Endothelial cell of umbilical vein (primary cell): ENCODE measurements at regions of chr10 and their contacts with region 1.

Region 1: GRCh38 chr10:99845837-99846382 is 63.5 kb downstream of the ABCC2 start:
- DNase-seq: peak; percentile 94
- H3K4me3 ChIP-seq: peak overlapping the region in 1 of 3 experiments; percentile 41
- H3K27ac ChIP-seq: peak overlapping the region; percentile 10
- H3K4me1 ChIP-seq: peaks cover 18% of the 10 kb centered on the region
- H3K27me3 ChIP-seq: no peaks in the 10 kb centered on the region
- CTCF ChIP-seq: peak; percentile 72 to 94
- POLR2A ChIP-seq: no peak

Region 2: DNA sequence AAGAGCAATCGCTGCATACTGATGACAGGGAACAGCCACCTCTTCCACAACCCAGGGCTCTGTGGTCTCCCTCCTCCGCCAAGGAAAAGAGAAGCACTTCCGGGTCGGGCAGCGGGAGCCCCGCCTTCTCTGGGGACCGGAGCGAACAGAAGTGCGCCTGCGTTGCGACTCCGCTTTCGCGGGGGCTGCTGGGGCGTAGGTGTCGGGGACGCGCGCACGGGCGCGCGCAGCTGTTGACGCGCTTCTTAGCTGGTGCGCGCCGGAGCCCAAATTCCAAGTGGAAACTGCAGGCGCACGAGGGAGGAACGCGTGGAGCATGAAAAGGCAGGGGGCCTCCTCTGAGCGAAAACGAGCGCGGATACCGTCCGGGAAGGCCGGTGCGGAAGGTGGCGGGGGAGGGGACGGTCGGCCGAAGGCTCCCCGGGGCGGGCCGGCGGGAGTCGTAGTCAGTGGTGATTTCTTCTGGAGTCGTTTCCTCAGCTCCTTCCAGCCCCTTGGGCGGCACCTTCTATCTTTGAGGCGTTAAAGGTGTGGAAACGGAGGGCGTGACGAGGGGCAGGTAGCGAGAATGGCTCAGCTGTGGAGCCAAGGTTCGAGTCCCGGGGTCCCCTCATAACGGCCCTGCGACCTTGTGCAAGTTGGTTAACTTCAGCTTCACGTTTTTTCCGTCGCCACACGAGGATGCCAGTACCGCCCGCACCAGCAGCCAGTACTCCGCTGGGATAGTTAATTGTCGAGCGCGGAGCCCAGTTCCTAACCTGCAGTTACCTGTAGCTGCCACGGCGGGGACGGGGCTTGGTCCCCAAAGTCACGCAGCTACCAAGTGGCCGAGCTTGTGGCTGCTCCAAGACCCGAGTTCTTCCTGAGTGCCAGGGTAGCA is 113.6 kb before region 1 on chr10 and contains the starts of genes COX15 and CUTC:
- CTCF ChIA-PET with region 1: interaction called, 49 read pairs
- POLR2A ChIA-PET with region 1: interaction called, 4 read pairs
- dilution Hi-C with region 1: no loop called
- intact Hi-C with region 1: loop called (anchors 1 kb)
- DNase-seq: peak; percentile 98
- H3K4me3 ChIP-seq: peak within 1 kb of the TSS; percentile 48 to 90 (median 65)
- H3K27ac ChIP-seq: peak within 1 kb of the TSS; percentile 53
- H3K4me1 ChIP-seq: peaks cover 15% of the 10 kb centered on the region
- H3K27me3 ChIP-seq: no peaks in the 10 kb centered on the region
- CTCF ChIP-seq: peak; percentile 33 to 54
- POLR2A ChIP-seq: peak; percentile 86
- total RNA-seq, gene COX15: 31.7 and 34.6 TPM in 2 replicates
- total RNA-seq, gene CUTC: 17.7 and 20.4 TPM in 2 replicates

Region 3: DNA sequence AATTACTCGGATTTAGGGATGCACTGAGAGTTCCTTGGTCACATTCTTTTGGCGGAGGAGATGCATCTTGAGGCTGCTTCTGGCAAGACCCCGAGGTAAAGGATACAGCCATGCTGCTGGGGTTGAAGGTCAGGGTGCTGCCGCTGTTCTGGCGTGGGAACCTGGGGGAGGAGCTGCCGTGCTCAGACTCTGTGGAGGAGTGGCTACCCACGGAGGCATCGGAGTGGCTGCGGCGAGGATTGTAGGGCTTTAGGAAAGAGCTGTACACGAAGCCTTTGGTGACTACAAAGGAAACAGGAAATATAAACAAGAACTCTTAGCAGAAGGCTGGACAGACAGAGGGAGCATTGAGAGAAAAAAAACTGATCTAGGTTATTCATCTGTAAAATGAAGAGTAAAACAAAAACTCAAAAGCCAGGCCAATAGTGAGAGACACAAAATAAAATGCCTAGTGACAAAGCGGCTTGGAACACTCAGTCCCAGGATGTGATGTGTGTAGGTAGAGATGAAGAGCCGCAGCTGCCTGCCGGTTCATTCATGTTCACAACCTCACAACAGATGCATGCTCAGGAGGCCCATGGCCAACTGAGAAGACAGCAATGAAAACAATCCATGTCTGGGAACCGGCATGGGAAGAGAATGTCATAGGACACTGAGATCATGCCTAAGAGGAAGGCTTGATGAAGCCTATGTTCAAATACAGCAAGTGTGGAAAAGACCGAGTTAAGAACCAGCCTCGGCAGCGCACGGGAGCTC is 34.3 kb after region 1 on chr10:
- CTCF ChIA-PET with region 1: interaction called, 20 read pairs
- POLR2A ChIA-PET with region 1: no interaction called
- dilution Hi-C with region 1: no loop called
- intact Hi-C with region 1: loop called (anchors 2 kb)
- DNase-seq: peak; percentile 81
- H3K4me3 ChIP-seq: no peak overlapping the region
- H3K27ac ChIP-seq: peak overlapping the region; percentile 72
- H3K4me1 ChIP-seq: peaks cover 22% of the 10 kb centered on the region
- H3K27me3 ChIP-seq: no peaks in the 10 kb centered on the region
- CTCF ChIP-seq: no peak
- POLR2A ChIP-seq: no peak

Region 4: DNA sequence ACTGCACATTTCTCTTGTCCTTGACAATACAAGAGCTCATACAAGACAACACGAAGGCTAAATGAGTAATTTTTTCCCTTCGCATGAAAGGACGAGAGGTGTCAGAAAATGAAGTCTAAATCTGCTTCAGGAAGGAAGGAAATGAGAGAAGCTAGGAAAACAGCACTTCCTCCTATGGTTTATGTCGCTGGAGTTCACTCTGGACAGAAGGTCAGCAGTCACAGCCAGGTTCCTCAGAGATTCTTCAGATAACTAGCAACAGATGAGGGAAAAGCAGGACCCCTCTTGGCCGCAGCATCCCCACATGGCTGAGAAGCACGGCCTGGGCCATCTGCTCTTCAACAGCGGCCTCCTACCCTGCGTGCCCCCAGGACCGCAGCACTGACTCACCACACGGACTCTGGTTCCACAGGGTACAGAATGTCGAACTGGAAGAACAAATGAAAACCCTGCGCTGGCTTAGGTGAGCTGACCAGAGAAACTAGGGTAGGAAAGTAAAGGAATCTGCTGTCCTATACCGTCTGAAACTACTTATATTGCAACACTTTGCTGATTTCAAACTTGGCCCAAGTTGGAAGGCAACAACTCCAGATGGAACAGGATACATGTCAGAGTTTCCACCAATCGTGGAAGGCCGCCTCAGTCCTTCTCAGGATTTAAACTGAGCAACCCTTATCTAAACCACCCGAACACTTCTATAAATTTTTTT is 137.5 kb after region 1 on chr10:
- CTCF ChIA-PET with region 1: no interaction called
- POLR2A ChIA-PET with region 1: no interaction called
- dilution Hi-C with region 1: no loop called
- intact Hi-C with region 1: no loop called
- DNase-seq: peak; percentile 90
- H3K4me3 ChIP-seq: peak overlapping the region in 1 of 3 experiments; percentile 6
- H3K27ac ChIP-seq: peak overlapping the region; percentile 82
- H3K4me1 ChIP-seq: peaks cover 65% of the 10 kb centered on the region
- H3K27me3 ChIP-seq: no peaks in the 10 kb centered on the region
- CTCF ChIP-seq: no peak
- POLR2A ChIP-seq: peak; percentile 70

Region 5: GRCh38 chr10:100009793-100010676 is 164.1 kb after region 1 on chr10 and contains the start of gene DNMBP:
- CTCF ChIA-PET with region 1: interaction called, 38 read pairs
- POLR2A ChIA-PET with region 1: interaction called, 3 read pairs
- dilution Hi-C with region 1: no loop called
- intact Hi-C with region 1: loop called (anchors 1 kb)
- DNase-seq: peak; percentile 83
- H3K4me3 ChIP-seq: peak within 1 kb of the TSS; percentile 75 to 99 (median 96)
- H3K27ac ChIP-seq: peak within 1 kb of the TSS; percentile 83
- H3K4me1 ChIP-seq: peaks cover 31% of the 10 kb centered on the region
- H3K27me3 ChIP-seq: no peaks in the 10 kb centered on the region
- CTCF ChIP-seq: peak; percentile 37 to 63
- POLR2A ChIP-seq: peak; percentile 74
- total RNA-seq, gene DNMBP: 53.4 and 56.1 TPM in 2 replicates

Region 6: GRCh38 chr10:100174699-100175677 is 329.1 kb after region 1 on chr10:
- CTCF ChIA-PET with region 1: interaction called, 12 read pairs
- POLR2A ChIA-PET with region 1: no interaction called
- dilution Hi-C with region 1: no loop called
- intact Hi-C with region 1: no loop called
- DNase-seq: no peak
- H3K4me3 ChIP-seq: no peak overlapping the region
- H3K27ac ChIP-seq: no peak overlapping the region
- H3K4me1 ChIP-seq: no peaks in the 10 kb centered on the region
- H3K27me3 ChIP-seq: no peaks in the 10 kb centered on the region
- CTCF ChIP-seq: no peak
- POLR2A ChIP-seq: no peak

Region 7: GRCh38 chr10:100338434-100339036 is 492.6 kb after region 1 on chr10:
- CTCF ChIA-PET with region 1: no interaction called
- POLR2A ChIA-PET with region 1: no interaction called
- dilution Hi-C with region 1: no loop called
- intact Hi-C with region 1: loop called (anchors 2 kb)
- DNase-seq: peak; percentile 63
- H3K4me3 ChIP-seq: no peak overlapping the region
- H3K27ac ChIP-seq: no peak overlapping the region
- H3K4me1 ChIP-seq: no peaks in the 10 kb centered on the region
- H3K27me3 ChIP-seq: peaks cover 7 to 8% of the 10 kb centered on the region in 2 experiments
- CTCF ChIP-seq: peak; percentile 81 to 88
- POLR2A ChIP-seq: no peak